MCF 10A (cell line): ENCODE measurements at regions of chr22 and their contacts with region 1.

Region 1: GRCh38 chr22:32080904-32081303 is 37.8 kb downstream of the SLC5A1 start:
- DNase-seq: peak; percentile 76
- H3K4me3 Mint-ChIP-seq: no peak overlapping the region
- H3K27ac Mint-ChIP-seq: no peak overlapping the region
- H3K4me1 Mint-ChIP-seq: no peaks in the 10 kb centered on the region
- H3K27me3 Mint-ChIP-seq: peaks cover 27% of the 10 kb centered on the region
- CTCF ChIP-seq: peak; percentile 83

Region 2: GRCh38 chr22:31970490-31971444 is 110.1 kb before region 1 on chr22:
- CTCF ChIA-PET with region 1: interaction called, 174 read pairs
- POLR2A ChIA-PET with region 1: no interaction called
- intact Hi-C with region 1: no loop called
- DNase-seq: peak; percentile 88
- H3K4me3 Mint-ChIP-seq: peak overlapping the region; percentile 82
- H3K27ac Mint-ChIP-seq: peak overlapping the region; percentile 71
- H3K4me1 Mint-ChIP-seq: peaks cover 6% of the 10 kb centered on the region
- H3K27me3 Mint-ChIP-seq: no peaks in the 10 kb centered on the region
- CTCF ChIP-seq: peak; percentile 94

Region 3: DNA sequence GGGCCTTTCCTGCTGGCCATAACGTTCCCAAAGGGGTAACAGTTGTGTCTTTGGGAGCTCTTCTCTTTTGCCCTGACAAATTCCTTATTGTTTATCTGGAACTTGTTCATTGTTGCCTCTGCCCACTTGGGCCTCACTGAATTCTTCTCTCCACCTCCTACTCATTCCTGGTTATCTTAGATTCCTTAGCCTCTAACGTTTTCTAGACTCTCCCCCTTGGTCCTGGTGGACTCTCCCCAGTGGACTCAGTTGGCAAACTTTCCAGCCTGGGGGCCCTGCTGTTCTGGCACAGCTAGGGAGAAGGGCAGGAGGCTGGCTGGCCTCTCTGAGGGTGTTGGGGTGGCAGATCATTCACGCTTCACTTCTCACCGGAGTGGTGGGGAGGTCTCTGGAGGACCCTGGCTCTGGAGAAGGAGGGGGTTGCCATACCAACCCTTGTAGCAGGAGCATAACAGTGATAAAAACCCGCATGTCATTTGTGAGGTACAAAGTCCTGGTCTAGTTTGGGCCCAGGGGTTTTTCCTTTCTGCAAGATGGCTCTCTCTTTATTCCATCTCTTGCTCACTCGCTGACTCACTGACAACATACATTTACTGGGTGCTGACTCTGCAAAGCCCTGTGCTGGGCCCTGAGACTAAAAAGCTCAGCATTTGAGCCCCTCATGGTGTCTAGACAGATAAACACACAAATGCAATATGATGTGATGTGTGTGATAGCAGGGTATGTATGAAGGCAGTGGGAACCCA is 96.8 kb before region 1 on chr22:
- CTCF ChIA-PET with region 1: interaction called, 174 read pairs
- POLR2A ChIA-PET with region 1: interaction called, 3 read pairs
- intact Hi-C with region 1: no loop called
- DNase-seq: no peak
- H3K4me3 Mint-ChIP-seq: no peak overlapping the region
- H3K27ac Mint-ChIP-seq: no peak overlapping the region
- H3K4me1 Mint-ChIP-seq: no peaks in the 10 kb centered on the region
- H3K27me3 Mint-ChIP-seq: peaks cover 17% of the 10 kb centered on the region
- CTCF ChIP-seq: no peak

Region 4: GRCh38 chr22:32050678-32051515 is 30.0 kb before region 1 on chr22:
- CTCF ChIA-PET with region 1: interaction called, 10 read pairs
- POLR2A ChIA-PET with region 1: interaction called, 5 read pairs
- intact Hi-C with region 1: no loop called
- DNase-seq: peak; percentile 97
- H3K4me3 Mint-ChIP-seq: no peak overlapping the region
- H3K27ac Mint-ChIP-seq: peak overlapping the region; percentile 77
- H3K4me1 Mint-ChIP-seq: peaks cover 16% of the 10 kb centered on the region
- H3K27me3 Mint-ChIP-seq: peaks cover 3% of the 10 kb centered on the region
- CTCF ChIP-seq: no peak

Region 5: DNA sequence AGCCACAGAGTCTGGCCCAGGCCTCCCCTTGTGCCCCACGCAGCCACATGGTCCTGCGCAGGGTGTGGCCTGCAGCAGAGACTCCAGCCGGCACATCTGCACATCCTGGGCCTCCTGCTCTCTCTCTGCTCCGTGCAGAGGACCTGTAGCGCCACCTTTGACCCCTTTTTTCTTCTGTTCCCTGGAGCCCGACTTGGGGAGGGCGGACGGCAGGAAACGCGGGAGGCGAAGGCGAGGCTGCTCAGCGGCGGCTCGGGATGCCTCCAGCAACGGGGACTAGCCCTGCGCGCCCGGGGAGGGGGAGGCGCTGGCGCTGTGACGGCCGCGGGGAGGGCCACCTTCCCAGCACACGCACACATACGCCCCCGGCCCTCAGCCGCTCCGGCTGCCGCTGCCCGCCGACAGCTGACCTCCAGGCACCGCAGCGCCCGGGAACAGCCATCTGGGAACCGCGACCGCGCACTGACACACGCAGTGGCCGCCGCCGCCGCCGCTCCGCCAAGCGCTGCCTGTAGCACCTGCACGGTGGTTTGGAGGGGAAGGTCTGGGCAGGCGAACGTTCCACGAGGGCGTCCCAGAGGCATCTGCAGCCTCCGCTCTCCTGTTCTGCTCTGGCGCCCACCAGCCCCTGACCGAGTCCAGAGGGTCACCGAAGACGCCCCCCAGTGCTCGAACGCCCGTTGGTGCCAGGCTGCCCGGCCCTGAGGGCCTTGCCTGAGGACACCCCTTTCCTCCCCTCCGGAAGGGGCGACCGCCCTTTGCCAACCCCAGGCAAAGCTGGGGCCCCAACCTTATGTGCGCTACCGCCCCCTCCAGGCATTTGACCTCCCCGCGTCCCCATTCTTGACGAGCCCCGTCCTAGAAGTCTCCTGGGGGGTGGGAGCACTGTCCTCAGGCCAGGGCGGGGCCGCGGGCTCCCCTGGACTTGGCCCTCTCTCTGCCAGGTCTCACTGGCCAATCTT is 95.1 kb after region 1 on chr22:
- CTCF ChIA-PET with region 1: no interaction called
- POLR2A ChIA-PET with region 1: no interaction called
- intact Hi-C with region 1: no loop called
- DNase-seq: no peak
- H3K4me3 Mint-ChIP-seq: no peak overlapping the region
- H3K27ac Mint-ChIP-seq: no peak overlapping the region
- H3K4me1 Mint-ChIP-seq: no peaks in the 10 kb centered on the region
- H3K27me3 Mint-ChIP-seq: peaks cover 13% of the 10 kb centered on the region
- CTCF ChIP-seq: no peak

Region 6: DNA sequence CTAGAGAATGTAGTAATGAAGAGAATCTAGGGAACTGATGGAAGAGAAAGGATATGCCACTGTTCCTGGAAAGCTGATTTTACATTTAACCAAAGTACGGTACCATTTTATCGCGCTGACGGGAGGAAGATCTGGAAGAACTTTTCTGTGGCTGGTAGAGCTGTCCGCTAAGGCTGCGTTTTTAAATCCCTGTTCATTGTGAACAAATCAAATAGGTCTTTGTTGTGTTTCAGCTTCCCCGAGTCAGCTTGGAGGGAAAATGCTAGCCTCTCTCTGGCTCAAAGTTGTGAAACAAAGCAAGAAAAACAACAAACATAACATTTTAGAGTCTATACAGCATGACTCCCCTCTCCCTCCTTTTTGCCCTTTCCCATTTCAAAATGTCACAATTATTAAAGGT is 428.1 kb after region 1 on chr22:
- CTCF ChIA-PET with region 1: no interaction called
- POLR2A ChIA-PET with region 1: no interaction called
- intact Hi-C with region 1: no loop called
- DNase-seq: no peak
- H3K4me3 Mint-ChIP-seq: no peak overlapping the region
- H3K27ac Mint-ChIP-seq: no peak overlapping the region
- H3K4me1 Mint-ChIP-seq: no peaks in the 10 kb centered on the region
- H3K27me3 Mint-ChIP-seq: no peaks in the 10 kb centered on the region
- CTCF ChIP-seq: no peak